SK-N-SH (cell line): ENCODE measurements at regions of chr15 and their contacts with region 1.

Region 1: DNA sequence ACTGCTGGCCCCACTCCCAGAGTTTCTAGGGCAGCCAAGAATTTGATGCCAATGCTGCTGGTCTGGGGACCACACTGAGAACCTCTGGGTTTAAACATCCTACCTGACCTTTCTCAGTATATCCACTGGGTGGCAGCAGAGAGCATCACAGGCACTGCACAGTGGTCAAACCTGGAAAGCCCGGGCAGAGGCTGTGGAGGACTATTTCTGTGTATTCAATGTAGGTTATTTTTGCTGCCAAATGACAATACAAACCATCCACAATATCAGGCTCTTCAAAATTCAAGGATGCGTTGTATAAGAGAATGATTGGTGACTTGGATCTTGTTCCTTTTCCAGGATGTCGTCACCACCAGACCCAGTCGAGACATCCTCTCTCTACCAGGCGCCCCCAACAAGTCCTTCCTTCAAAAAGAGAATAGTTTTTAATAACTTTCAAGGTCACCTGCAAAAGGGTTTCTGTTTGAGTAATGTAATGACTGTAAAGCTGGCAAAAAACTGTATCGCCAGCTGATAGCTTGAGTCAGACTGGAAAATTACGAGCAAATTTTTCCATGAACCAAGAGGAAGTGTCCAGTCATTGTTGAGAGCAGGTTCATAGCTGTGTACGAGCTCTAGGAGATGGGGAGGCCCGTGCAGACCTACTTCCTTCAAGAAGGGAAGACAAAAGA is 30.5 kb upstream of the MYZAP start:
- DNase-seq: peak; percentile 73
- H3K4me3 ChIP-seq: peak overlapping the region in 1 of 2 experiments; percentile 11; a peak in 1 of 4 replicates
- H3K27ac ChIP-seq: peak overlapping the region in 1 of 2 experiments; percentile 34; a peak in 1 of 4 replicates
- H3K4me1 ChIP-seq: peaks cover 0 to 9% of the 10 kb centered on the region in 2 experiments; a peak in 1 of 4 replicates
- H3K27me3 ChIP-seq: no peaks in the 10 kb centered on the region
- CTCF ChIP-seq: peak; percentile 91
- EP300 ChIP-seq: 0 out of 4 replicates have a peak, but pooled peaks of 1 of the 2 experiments have one; percentile 11
- RAD21 ChIP-seq: peak; percentile 86

Region 2: DNA sequence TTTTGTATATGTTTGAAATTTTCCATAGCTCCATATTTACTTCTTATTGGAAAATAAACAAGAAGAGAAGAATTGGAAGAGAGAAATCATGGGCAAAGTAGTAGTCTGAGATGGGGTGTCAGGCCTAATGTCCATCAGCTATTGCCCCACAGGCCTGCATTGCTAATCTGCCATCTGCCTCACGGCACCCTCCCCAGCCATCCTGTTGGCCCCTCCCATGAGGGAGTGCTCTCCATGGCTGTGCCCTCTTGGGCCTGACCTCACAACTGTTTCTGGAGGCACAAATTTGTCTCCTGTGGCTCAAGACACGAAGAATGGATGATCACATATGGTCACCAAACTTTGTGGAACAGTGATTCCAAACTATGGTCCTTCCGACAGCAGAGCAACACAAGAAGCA is 212.4 kb before region 1 on chr15:
- CTCF ChIA-PET with region 1: no interaction called
- POLR2A ChIA-PET with region 1: no interaction called
- DNase-seq: no peak
- H3K4me3 ChIP-seq: no peak overlapping the region
- H3K27ac ChIP-seq: no peak overlapping the region
- H3K4me1 ChIP-seq: no peaks in the 10 kb centered on the region; a peak in 1 of 4 replicates
- H3K27me3 ChIP-seq: no peaks in the 10 kb centered on the region
- CTCF ChIP-seq: no peak
- EP300 ChIP-seq: no peak
- RAD21 ChIP-seq: no peak

Region 3: GRCh38 chr15:57485869-57486268 is 75.3 kb before region 1 on chr15:
- CTCF ChIA-PET with region 1: no interaction called
- POLR2A ChIA-PET with region 1: no interaction called
- DNase-seq: no peak
- H3K4me3 ChIP-seq: no peak overlapping the region
- H3K27ac ChIP-seq: peak overlapping the region in 1 of 2 experiments; percentile 54; a peak in 2 of 4 replicates
- H3K4me1 ChIP-seq: no peaks in the 10 kb centered on the region; a peak in 1 of 4 replicates
- H3K27me3 ChIP-seq: no peaks in the 10 kb centered on the region
- CTCF ChIP-seq: no peak
- EP300 ChIP-seq: peak in 1 of 2 experiments; percentile 75; a peak in 1 of 4 replicates
- RAD21 ChIP-seq: no peak

Region 4: GRCh38 chr15:57541805-57542504 is 19.2 kb before region 1 on chr15:
- CTCF ChIA-PET with region 1: interaction called, 145 read pairs
- POLR2A ChIA-PET with region 1: no interaction called
- DNase-seq: peak; percentile 68
- H3K4me3 ChIP-seq: peak overlapping the region in 1 of 2 experiments; percentile 17; a peak in 1 of 4 replicates
- H3K27ac ChIP-seq: no peak overlapping the region
- H3K4me1 ChIP-seq: peaks cover 2 to 11% of the 10 kb centered on the region in 2 experiments; a peak in 2 of 4 replicates
- H3K27me3 ChIP-seq: no peaks in the 10 kb centered on the region
- CTCF ChIP-seq: peak; percentile 91
- EP300 ChIP-seq: no peak
- RAD21 ChIP-seq: peak; percentile 72

Region 5: GRCh38 chr15:57595011-57595866 is 34.1 kb after region 1 on chr15:
- CTCF ChIA-PET with region 1: interaction called, 15 read pairs
- POLR2A ChIA-PET with region 1: no interaction called
- DNase-seq: peak; percentile 45
- H3K4me3 ChIP-seq: no peak overlapping the region
- H3K27ac ChIP-seq: peak overlapping the region in 1 of 2 experiments; percentile 22; a peak in 1 of 4 replicates
- H3K4me1 ChIP-seq: peaks cover 0 to 14% of the 10 kb centered on the region in 2 experiments; a peak in 2 of 4 replicates
- H3K27me3 ChIP-seq: peaks cover 17% of the 10 kb centered on the region; the same call in 1 of the 2 replicates
- CTCF ChIP-seq: no peak
- EP300 ChIP-seq: peak in 1 of 2 experiments; percentile 59; a peak in 1 of 4 replicates
- RAD21 ChIP-seq: no peak

Region 6: DNA sequence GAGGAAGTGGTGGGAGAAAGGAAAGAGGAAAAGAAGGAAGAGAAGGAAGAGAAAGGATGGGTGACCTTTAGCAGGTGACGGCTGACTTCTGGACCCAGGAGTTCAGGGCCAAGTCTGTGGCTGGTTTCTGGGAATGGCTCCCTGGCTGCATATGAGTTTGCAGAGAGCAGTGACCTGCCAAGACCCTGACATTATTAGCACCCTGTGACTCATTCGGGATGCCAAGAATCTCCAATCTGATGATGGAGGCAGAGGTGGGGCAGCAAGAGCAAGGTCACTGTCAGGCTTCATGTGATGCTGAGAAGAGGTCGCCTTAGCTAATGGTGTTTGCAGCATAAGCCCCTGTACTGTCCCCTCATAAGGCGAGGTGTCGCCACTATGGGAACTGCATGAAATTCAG is 73.1 kb after region 1 on chr15:
- CTCF ChIA-PET with region 1: interaction called, 16 read pairs
- POLR2A ChIA-PET with region 1: no interaction called
- DNase-seq: no peak
- H3K4me3 ChIP-seq: no peak overlapping the region
- H3K27ac ChIP-seq: no peak overlapping the region
- H3K4me1 ChIP-seq: no peaks in the 10 kb centered on the region
- H3K27me3 ChIP-seq: no peaks in the 10 kb centered on the region
- CTCF ChIP-seq: no peak
- EP300 ChIP-seq: no peak
- RAD21 ChIP-seq: no peak

Region 7: DNA sequence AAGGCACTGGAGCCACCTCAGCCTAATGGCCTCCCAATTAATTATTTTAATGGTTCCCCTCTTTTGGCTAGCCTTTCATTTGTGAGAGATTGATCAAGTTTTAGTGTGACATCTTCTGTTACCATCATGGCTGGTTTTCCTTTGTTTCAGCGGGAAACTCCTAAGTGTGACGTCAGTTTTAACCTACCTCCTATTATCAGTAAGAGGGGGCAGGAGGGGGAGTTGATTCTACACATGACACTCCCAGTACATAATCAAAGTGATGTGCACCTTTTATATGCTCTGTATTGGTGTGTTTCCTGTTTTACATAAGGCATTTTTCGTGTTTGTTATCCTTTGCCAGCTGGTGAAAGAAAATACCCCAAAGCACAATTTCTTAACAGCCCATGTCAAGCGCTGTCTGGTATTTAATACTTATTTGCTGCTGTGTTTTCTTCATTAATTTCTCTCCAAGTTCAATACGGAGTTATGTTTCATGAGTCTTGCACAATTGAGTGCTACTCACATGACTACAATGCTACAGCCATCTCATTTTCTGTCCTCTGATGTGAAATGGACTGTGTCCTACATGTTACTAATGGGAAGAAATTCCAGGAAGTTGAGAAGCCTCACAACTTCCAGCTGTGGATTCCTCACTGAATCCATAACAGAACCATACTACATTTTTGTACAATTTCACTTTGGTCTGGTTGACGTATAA is 93.1 kb after region 1 on chr15:
- CTCF ChIA-PET with region 1: interaction called, 16 read pairs
- POLR2A ChIA-PET with region 1: no interaction called
- DNase-seq: no peak
- H3K4me3 ChIP-seq: no peak overlapping the region
- H3K27ac ChIP-seq: no peak overlapping the region
- H3K4me1 ChIP-seq: no peaks in the 10 kb centered on the region
- H3K27me3 ChIP-seq: no peaks in the 10 kb centered on the region
- CTCF ChIP-seq: no peak
- EP300 ChIP-seq: no peak
- RAD21 ChIP-seq: no peak

Region 8: DNA sequence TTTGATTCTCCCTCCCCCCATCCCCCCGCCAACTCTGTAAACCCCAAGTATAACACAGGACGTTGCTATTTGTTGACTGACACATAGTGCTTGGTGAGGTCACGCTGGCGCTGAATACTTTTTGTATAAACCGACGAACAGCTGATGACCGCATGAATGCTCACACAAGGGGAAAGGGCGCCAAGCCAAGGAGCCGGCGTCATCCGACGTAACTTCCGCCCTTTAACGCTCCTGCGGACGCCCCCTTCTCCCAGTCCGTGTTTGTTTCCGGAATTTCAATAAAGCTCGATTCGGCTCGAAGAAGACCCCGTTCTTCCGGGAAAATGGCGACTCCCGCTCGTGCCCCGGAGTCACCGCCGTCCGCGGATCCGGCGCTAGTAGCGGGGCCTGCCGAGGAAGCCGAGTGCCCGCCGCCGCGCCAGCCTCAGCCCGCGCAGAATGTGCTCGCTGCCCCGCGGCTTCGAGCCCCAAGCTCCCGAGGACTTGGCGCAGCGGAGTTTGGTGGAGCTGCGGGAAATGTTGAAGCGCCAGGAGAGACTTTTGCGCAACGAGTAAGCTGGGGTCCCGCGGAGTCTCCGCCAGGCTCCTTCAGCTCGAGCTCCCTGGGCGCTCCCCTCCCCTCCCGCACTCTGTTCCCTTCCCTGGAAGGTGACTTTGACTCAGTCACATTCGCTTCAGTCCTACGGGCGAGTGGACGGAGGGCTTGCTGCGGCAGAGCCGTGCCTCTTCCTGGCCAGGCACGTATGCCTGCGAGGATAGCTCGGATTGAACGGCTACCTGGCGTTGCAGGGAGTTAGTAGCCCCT is 145.4 kb after region 1 on chr15 and contains the start of gene POLR2M:
- CTCF ChIA-PET with region 1: interaction called, 15 read pairs
- POLR2A ChIA-PET with region 1: no interaction called
- DNase-seq: peak; percentile 88
- H3K4me3 ChIP-seq: peak within 1 kb of the TSS; percentile 80 to 99
- H3K27ac ChIP-seq: peak within 1 kb of the TSS; percentile 82 to 85
- H3K4me1 ChIP-seq: peaks cover 0 to 12% of the 10 kb centered on the region in 2 experiments; a peak in 3 of 4 replicates
- H3K27me3 ChIP-seq: no peaks in the 10 kb centered on the region
- CTCF ChIP-seq: no peak
- EP300 ChIP-seq: peak; percentile 18 to 62; a peak in 2 of 4 replicates
- RAD21 ChIP-seq: no peak
- polyA plus RNA-seq, gene POLR2M: 105 and 160 TPM in 2 replicates

Region 9: DNA sequence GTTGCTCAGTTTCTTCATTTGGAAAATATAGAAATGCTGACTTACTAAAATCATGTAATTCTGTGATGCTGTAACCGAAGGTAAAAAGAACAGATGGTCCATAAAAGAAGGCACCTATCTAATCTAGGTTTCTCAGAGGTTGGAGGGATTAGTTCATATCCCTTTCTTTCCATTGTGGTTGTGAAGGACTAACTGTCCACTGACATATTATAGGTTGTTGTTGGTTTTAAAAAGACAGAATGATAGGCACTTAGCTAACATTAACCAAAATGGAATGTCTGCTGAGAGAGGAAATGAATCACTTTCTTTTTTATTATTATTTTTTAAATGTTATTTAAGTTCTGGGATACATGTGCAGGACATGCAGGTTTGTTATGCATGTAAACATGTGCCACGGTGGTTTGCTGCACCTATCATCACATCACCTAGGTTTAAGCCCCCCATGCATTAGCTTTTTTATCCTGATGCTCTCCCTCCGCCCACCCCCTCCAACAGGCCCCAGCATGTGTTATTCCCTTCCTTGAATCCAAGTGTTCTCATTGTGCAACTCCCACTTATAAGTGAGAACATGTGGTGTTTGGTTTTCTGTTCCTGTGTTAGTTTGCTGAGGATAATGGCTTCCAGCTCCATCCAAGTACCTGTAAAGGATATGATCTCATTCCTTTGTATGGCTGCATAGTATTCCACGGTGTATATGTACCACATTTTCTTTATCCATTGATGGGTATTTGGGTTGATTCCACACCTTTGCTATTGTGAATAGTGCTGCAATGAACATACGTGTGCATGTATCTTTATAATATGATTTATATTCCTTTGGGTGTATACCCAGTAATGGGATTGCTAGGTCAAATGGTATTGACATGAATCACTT is 458.6 kb after region 1 on chr15:
- CTCF ChIA-PET with region 1: no interaction called
- POLR2A ChIA-PET with region 1: no interaction called
- DNase-seq: no peak
- H3K4me3 ChIP-seq: no peak overlapping the region
- H3K27ac ChIP-seq: no peak overlapping the region; a peak in 1 of 4 replicates
- H3K4me1 ChIP-seq: no peaks in the 10 kb centered on the region
- H3K27me3 ChIP-seq: no peaks in the 10 kb centered on the region
- CTCF ChIP-seq: no peak
- EP300 ChIP-seq: no peak
- RAD21 ChIP-seq: no peak